ENCODE measurements at regions of chrX and their contacts with region 1.

Region 1: DNA sequence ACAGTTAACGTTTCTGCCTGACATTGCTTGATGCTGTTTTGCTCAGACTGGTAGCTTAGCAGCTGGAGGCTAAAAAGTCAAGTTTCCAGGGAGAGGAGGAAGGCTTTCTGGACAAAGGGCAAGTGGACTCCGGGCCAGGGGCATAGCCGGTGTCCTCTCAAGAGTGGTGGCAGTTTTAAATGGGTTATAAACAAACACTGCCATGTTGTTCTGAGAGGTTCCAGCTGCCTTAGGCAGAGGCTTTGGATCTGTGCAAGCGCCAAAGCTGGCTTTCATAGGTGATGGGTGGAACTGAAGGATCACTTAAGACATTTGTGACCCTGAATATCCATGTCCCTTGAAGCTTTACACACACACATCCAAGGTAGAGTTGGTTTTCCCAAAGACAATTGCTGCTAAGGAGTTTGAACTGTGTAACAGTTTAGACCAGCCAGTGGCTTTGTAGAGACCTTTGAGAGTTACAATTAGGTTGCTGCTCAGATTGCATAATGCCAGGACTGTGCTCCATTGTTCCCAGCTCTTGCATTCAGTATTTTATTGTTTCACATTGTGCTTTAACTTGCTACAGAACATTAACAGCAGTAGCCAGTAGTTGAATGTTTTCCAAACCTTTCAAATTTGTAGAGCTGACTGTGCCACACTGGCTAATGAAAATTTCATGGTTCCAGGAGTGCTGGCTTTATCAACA is 54.1 kb upstream of the AP1S2 start:
- DNase-seq: no peak
- ATAC-seq: no peak
- H3K4me3 ChIP-seq: no peak overlapping the region
- H3K27ac ChIP-seq: no peak overlapping the region
- H3K4me1 ChIP-seq: no peaks in the 10 kb centered on the region
- H3K27me3 ChIP-seq: no peaks in the 10 kb centered on the region
- CTCF ChIP-seq: no peak

Region 2: GRCh38 chrX:15087747-15088146 is 821.0 kb before region 1 on chrX:
- intact Hi-C with region 1: loop called in 1 of 2 experiments (anchors 5 kb)
- DNase-seq: no peak
- ATAC-seq: no peak
- H3K4me3 ChIP-seq: no peak overlapping the region
- H3K27ac ChIP-seq: no peak overlapping the region
- H3K4me1 ChIP-seq: no peaks in the 10 kb centered on the region
- H3K27me3 ChIP-seq: peaks cover 0 to 3% (median 0%) of the 10 kb centered on the region in 3 donors
- CTCF ChIP-seq: no peak